Endothelial cell of umbilical vein (primary cell): ENCODE measurements at regions of chr3 and their contacts with region 1.

Region 1: DNA sequence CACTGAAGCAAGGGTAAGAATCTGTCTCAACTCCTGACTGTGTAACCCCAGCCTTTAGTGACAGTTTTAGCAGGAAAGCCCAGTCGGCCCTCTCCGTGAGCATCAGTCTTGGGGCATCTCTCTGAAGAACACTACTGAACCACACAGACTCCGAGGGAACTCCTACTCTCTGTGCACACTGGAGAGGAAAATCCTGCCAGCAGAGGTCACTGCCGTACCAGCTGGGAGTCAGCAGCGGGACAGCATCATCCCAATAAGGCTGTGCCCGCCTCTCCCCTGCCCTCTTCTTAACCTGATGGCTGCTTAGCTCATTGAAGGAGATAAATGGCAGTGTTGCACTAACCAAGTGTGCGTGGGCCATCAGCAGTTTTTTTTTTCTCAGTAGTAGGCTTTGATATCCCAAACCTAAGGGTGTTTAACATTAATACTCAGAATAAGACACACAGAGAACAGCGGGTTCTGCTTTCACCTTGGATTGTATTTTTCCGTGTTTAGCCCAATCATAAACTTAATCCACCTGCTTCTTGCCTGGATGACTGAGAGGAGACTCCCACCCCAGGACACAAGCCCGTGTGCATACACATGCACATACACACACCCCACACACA is 26.6 kb upstream of the RASA2 start:
- DNase-seq: peak; percentile 77
- H3K4me3 ChIP-seq: no peak overlapping the region
- H3K27ac ChIP-seq: no peak overlapping the region
- H3K4me1 ChIP-seq: no peaks in the 10 kb centered on the region
- H3K27me3 ChIP-seq: no peaks in the 10 kb centered on the region
- CTCF ChIP-seq: peak; percentile 83 to 86
- POLR2A ChIP-seq: no peak

Region 2: GRCh38 chr3:141471160-141471559 is 11.0 kb after region 1 on chr3:
- CTCF ChIA-PET with region 1: interaction called, 16 read pairs
- POLR2A ChIA-PET with region 1: no interaction called
- dilution Hi-C with region 1: no loop called
- intact Hi-C with region 1: loop called (anchors 2 kb)
- DNase-seq: no peak
- H3K4me3 ChIP-seq: no peak overlapping the region
- H3K27ac ChIP-seq: no peak overlapping the region
- H3K4me1 ChIP-seq: no peaks in the 10 kb centered on the region
- H3K27me3 ChIP-seq: no peaks in the 10 kb centered on the region
- CTCF ChIP-seq: no peak
- POLR2A ChIP-seq: no peak

Region 3: GRCh38 chr3:141553055-141553454 is 92.9 kb after region 1 on chr3:
- CTCF ChIA-PET with region 1: interaction called, 26 read pairs
- POLR2A ChIA-PET with region 1: no interaction called
- dilution Hi-C with region 1: no loop called
- intact Hi-C with region 1: no loop called
- DNase-seq: peak; percentile 52
- H3K4me3 ChIP-seq: no peak overlapping the region
- H3K27ac ChIP-seq: no peak overlapping the region
- H3K4me1 ChIP-seq: peaks cover 49% of the 10 kb centered on the region
- H3K27me3 ChIP-seq: no peaks in the 10 kb centered on the region
- CTCF ChIP-seq: no peak
- POLR2A ChIP-seq: peak; percentile 43

Region 4: DNA sequence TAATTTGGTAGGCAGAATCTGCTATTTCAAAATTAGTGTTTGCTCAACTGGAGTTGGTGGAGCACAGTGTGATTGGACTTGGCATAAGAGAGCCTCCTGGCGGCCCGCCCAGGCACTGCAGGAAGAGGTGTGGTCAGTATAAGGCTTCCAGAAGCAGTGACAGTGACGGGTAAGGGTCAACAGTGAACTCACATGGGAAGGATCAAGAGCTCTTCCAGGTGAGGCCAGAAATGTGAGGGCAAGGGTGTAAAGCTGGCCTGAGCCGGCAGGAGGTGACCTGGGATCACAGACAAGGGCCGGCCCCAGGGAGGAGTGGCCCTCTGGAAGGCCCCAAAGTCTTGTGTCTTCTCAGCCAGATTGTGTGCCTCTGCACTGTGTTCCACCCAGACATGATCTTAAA is 184.7 kb after region 1 on chr3:
- CTCF ChIA-PET with region 1: interaction called, 4 read pairs
- POLR2A ChIA-PET with region 1: no interaction called
- dilution Hi-C with region 1: no loop called
- intact Hi-C with region 1: loop called (anchors 1 kb)
- DNase-seq: peak; percentile 43
- H3K4me3 ChIP-seq: no peak overlapping the region
- H3K27ac ChIP-seq: no peak overlapping the region
- H3K4me1 ChIP-seq: no peaks in the 10 kb centered on the region
- H3K27me3 ChIP-seq: no peaks in the 10 kb centered on the region
- CTCF ChIP-seq: peak; percentile 76 to 88
- POLR2A ChIP-seq: no peak

Region 5: GRCh38 chr3:141913150-141913811 is 453.1 kb after region 1 on chr3:
- CTCF ChIA-PET with region 1: interaction called, 8 read pairs
- POLR2A ChIA-PET with region 1: no interaction called
- dilution Hi-C with region 1: no loop called
- intact Hi-C with region 1: loop called (anchors 5 kb)
- DNase-seq: peak; percentile 71
- H3K4me3 ChIP-seq: no peak overlapping the region
- H3K27ac ChIP-seq: no peak overlapping the region
- H3K4me1 ChIP-seq: no peaks in the 10 kb centered on the region
- H3K27me3 ChIP-seq: no peaks in the 10 kb centered on the region
- CTCF ChIP-seq: peak; percentile 54 to 56
- POLR2A ChIP-seq: no peak

Region 6: DNA sequence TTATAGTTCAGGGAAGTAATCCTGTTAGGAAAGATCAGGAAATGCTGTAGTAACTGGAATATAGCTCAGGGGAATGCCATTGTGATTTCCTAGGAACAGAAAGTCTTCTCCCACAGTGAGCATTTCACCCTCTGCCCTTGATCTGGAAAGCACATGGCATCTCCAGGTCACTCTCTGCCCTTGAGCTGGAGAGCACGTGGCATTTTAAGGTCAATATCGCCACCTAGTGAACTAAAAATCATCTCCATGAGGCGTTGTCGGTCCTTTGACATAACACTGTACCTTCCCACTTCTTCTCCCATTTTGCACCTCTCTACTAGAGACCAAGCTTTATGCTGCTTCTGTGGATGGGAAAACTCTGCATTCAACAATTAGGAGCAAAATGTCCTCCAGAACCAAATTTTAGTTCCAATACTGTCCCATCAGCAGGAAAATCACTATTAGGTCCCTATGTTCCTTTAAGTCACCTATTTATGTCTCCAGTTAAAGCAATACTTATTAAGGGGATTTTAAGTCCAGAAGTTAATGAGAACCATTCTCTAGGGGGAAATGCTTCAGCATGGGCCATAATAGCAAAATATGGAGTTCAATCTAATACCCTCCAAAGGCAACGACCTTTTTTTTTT is 819.9 kb after region 1 on chr3:
- CTCF ChIA-PET with region 1: interaction called, 3 read pairs
- POLR2A ChIA-PET with region 1: no interaction called
- dilution Hi-C with region 1: no loop called
- intact Hi-C with region 1: loop called (anchors 2 kb)
- DNase-seq: peak; percentile 66
- H3K4me3 ChIP-seq: no peak overlapping the region
- H3K27ac ChIP-seq: no peak overlapping the region
- H3K4me1 ChIP-seq: no peaks in the 10 kb centered on the region
- H3K27me3 ChIP-seq: peaks cover 0 to 2% of the 10 kb centered on the region in 2 experiments
- CTCF ChIP-seq: peak; percentile 43 to 49
- POLR2A ChIP-seq: no peak